A549 (cell line): ENCODE measurements at regions of chr11 and their contacts with region 1.

Region 1: DNA sequence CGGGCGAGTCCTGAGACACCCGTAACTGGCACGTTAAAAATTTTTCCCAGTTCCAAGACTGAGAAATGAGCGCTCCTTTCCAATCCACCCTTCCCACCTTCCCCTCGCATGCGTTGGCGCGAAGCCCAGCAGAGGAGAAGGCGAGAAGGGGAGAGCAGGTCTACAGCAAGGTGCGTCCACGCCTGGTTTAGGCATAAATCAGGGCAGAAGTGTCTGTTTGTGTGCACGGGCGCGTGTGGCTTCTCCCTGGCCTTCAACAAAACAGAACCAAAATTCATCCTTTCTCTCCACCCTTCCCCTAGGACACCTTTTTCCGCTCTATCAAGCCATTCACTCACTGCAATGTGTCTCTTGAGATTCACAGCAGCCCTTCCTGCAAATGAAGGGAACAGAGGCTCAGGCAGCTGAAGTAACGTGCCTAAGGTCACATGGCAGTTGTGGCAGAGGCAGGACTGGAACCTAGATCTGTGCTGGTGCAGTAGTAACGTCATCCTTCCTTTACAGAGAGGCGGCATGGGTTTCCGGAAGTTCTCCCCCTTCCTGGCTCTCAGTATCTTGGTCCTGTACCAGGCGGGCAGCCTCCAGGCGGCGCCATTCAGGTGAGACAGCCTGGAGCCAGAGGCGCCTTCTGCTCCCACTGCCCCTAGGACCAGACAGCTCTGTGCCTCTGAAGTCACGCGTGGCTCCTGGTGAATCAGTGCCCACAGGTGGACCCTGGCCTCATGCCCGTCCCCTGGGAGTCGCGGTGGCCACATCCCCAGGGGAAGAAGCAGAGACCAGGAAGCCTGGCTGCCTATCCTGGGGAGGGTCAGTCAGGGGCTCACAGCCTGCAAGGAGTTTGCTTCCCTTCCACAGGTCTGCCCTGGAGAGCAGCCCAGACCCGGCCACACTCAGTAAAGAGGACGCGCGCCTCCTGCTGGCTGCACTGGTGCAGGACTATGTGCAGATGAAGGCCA is 1.1 kb downstream of the CALCB start:
- DNase-seq: peak; percentile 69 to 85
- ATAC-seq: peak; percentile 80 to 96
- H3K4me3 ChIP-seq: peak overlapping the region; percentile 49
- H3K27ac ChIP-seq: peak overlapping the region in 1 of 2 experiments; percentile 70; a peak in 3 of 6 replicates
- H3K4me1 ChIP-seq: peaks cover 17% of the 10 kb centered on the region
- CTCF ChIP-seq: peak; percentile 78
- EP300 ChIP-seq: no peak
- POLR2A ChIP-seq: no peak
- RAD21 ChIP-seq: peak; percentile 79 to 80

Region 2: DNA sequence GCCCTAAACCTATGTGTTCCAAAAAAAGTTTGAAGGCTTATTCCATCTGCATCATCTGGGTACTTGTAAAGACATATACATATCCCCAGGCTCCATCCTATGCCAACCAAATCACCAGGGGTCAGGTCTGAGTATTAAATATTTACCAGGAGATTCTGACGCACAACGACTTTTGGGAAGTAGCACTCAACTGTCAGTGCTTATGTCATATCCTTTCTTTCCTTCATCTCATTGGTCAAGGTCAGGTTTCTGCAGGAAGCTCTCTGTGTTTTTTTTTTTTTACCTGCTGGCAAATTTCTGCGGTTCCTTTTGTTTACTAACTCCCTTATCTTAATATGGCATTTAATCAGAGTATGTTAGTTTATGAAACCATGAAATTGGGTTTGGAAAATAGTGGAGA is 159.9 kb before region 1 on chr11:
- CTCF ChIA-PET with region 1: interaction called, 129 read pairs
- POLR2A ChIA-PET with region 1: no interaction called
- DNase-seq: no peak
- ATAC-seq: no peak
- H3K4me3 ChIP-seq: no peak overlapping the region
- H3K27ac ChIP-seq: no peak overlapping the region
- H3K4me1 ChIP-seq: no peaks in the 10 kb centered on the region
- CTCF ChIP-seq: no peak
- EP300 ChIP-seq: no peak
- POLR2A ChIP-seq: no peak
- RAD21 ChIP-seq: no peak

Region 3: GRCh38 chr11:14974515-14975251 is 99.8 kb before region 1 on chr11:
- CTCF ChIA-PET with region 1: interaction called, 38 read pairs
- POLR2A ChIA-PET with region 1: no interaction called
- DNase-seq: peak; percentile 49 to 64
- ATAC-seq: peak; percentile 73 to 87
- H3K4me3 ChIP-seq: peak overlapping the region; percentile 29; the same call in 2 of the 3 replicates
- H3K27ac ChIP-seq: no peak overlapping the region
- H3K4me1 ChIP-seq: 0 out of 3 replicates have a peak, but pooled peaks cover 7% of the 10 kb centered on the region
- CTCF ChIP-seq: peak; percentile 59
- EP300 ChIP-seq: no peak
- POLR2A ChIP-seq: no peak
- RAD21 ChIP-seq: peak; percentile 34 to 38; a peak in 3 of 5 replicates

Region 4: GRCh38 chr11:15053191-15053685 is 21.2 kb before region 1 on chr11:
- CTCF ChIA-PET with region 1: interaction called, 18 read pairs
- POLR2A ChIA-PET with region 1: no interaction called
- DNase-seq: peak in 1 of 2 experiments; percentile 5
- ATAC-seq: peak in 1 of 2 experiments; percentile 76; a peak in 2 of 6 replicates
- H3K4me3 ChIP-seq: no peak overlapping the region
- H3K27ac ChIP-seq: peak overlapping the region; percentile 53 to 60; a peak in 3 of 6 replicates
- H3K4me1 ChIP-seq: peaks cover 11% of the 10 kb centered on the region; the same call in 2 of the 3 replicates
- CTCF ChIP-seq: no peak
- EP300 ChIP-seq: no peak
- POLR2A ChIP-seq: no peak
- RAD21 ChIP-seq: no peak

Region 5: GRCh38 chr11:15091625-15092024 is 17.1 kb after region 1 on chr11:
- CTCF ChIA-PET with region 1: interaction called, 24 read pairs
- POLR2A ChIA-PET with region 1: no interaction called
- DNase-seq: no peak
- ATAC-seq: no peak
- H3K4me3 ChIP-seq: no peak overlapping the region
- H3K27ac ChIP-seq: no peak overlapping the region
- H3K4me1 ChIP-seq: no peaks in the 10 kb centered on the region
- CTCF ChIP-seq: no peak
- EP300 ChIP-seq: no peak
- POLR2A ChIP-seq: no peak
- RAD21 ChIP-seq: no peak